AG04449 (cell line): ENCODE measurements at regions of chr20 and their contacts with region 1.

Region 1: DNA sequence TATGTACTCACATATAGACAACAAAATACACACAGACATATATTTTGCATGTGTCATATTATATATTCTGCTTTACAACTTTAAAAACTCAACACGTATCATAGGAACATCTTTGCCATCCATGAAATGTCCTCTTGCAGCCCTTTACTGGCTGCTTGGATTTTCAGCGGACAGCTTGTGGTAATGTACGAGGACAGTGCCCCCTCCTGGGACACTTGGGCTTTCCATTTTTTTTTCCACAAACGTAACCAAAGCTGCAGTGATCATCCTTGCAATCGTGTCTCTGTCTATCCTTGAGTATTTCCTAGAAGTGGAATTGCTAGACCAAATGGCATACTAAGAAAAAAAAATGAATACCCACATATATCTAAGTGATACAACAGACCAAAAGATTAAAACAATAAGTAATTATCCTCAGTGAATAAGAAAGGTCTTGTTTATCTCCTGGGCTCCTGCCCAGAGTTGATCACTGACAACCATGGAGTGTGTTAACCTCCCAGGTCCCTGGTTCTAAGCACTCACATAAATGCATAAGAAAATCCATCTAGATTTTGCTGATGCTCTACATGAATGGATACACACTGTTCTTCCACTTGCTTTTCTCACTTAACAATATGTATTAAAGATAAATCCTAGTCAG is 18.1 kb downstream of the BPI start:
- DNase-seq: no peak
- H3K4me3 ChIP-seq: no peak overlapping the region
- CTCF ChIP-seq: peak; percentile 58

Region 2: DNA sequence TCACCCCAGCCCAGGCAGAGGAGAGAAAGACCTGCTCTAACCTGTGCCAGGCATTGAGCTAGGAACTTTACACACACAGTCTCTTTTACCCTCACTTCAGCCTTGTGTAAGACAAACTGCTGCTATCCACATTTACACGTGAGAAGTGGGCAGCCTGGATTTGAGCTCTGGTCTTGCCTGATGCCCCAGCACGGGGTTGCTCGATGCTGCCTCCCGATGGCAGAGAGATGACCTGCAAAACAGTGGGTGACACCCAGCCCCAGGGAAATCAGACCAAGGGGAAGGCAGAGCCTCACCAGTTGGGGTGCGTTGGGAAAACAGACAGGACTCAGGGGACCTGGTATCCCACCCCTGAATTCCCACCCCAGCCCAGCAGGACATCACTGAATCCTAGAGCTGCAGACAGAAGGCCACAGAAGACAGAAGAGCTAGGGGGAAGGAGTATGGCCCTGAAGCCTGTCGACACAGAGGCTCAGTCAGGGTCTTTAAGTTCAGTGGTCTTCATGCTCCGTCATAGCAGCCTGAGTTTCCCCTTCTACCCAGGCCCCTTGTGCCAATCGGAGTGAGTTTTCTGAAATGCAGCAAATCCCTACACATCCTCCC is 17.1 kb before region 1 on chr20:
- CTCF ChIA-PET with region 1: interaction called, 70 read pairs
- POLR2A ChIA-PET with region 1: no interaction called
- DNase-seq: no peak
- H3K4me3 ChIP-seq: no peak overlapping the region
- CTCF ChIP-seq: peak; percentile 68